ENCODE measurements at regions of chr10 and their contacts with region 1.

Region 1: DNA sequence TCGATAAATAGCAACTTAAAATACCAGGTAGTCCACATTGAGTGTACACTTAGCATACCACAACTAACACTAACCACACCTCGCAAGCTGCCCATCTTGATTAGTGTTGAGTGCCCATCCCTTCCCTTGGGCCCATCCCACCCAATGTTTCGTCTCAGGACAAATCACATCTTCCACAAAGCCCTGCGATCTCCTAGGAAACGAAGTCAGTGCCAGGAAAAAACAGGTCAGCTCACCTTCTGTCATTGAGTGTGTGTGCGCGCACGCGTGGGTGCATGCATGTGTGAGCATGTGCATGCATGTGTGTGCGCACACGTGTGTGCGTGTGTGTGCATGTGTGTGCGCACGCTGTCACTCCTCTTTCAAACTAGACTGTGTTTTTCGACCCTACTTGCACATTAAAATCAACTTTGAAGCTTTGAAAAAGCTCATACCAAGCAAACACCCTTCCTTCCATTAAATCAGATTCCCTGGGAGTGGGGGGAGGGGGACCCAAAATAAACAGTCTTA is 48.8 kb upstream of the OPALIN start:
- H3K4me3 ChIP-seq: no peak overlapping the region
- H3K27ac ChIP-seq: no peak overlapping the region
- H3K4me1 ChIP-seq: no peaks in the 10 kb centered on the region
- CTCF ChIP-seq: no peak

Region 2: DNA sequence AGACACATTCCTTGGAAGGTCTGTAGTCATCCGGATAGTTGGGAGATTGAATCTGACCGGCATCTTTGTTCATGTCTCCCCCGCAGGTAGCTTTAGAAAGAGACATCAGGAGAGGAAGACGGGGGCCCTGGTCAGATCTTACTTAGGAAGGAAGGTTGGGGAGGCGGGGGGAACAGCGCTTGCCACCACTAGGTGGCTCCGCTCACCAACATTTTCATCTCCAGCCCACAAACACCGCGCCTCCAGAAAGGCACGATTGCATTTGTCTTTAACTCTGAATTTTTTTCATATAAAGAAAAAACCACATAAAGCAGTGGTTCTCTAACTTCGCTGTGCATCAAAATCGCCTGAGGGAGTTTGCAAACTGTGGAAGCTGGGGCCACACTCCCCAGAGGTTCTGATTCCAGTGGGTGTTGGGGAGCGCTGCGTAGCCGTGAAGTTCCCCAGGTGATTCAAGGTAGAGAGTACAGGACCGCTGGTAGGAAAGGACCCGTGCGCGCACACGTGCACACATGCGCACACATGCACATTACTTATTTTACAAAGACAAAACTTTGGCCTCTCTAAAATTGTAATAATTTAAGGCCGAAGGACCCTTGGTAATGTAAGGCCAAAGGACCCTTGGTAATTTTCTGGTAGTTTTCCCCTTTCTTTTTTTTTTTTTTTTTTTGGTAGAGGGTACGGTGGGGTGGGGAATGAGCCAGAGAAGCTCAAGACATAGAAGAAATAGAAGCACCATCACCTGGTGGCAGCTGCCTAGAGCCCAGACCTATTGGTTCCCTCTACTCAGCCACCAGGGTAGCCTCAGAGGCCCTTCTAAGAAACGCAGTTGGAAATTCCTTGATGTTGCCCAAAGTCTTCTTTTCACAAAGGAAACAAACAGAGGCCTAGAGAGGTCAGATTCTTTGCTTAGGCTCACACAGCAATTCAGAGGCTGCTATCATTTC is 11.4 kb before region 1 on chr10:
- CTCF ChIA-PET with region 1: interaction called, 15 read pairs
- POLR2A ChIA-PET with region 1: no interaction called
- H3K4me3 ChIP-seq: no peak overlapping the region
- H3K27ac ChIP-seq: no peak overlapping the region
- H3K4me1 ChIP-seq: no peaks in the 10 kb centered on the region
- CTCF ChIP-seq: peak; percentile 68